Lower leg skin (tissue), 4 donors: ENCODE measurements at regions of chr6 and their contacts with region 1.

Region 1: DNA sequence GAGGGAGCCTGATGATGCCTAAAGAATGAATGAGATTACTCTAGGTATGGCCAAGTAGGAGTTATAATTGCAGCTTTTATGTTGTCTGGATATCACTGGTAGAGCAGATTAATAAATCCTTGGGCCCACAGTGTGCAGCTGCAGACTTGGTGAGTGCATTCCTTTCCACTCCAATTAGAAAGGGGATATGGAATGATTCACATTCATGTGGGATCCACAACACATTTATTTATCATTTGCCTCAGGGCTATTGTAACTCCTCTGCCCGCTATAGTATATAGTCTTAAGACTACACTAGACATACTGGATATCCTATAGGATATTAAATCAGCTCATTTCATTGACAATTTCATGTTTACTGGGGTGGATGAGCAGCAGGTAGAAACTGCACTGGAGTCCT is 11.6 kb upstream of the HLA-G start:
- DNase-seq: no peak
- H3K4me3 ChIP-seq: no peak overlapping the region
- CTCF ChIP-seq: no peak
- POLR2A ChIP-seq: no peak

Region 2: GRCh38 chr6:28458564-28458963 is 1357.5 kb before region 1 on chr6:
- intact Hi-C with region 1: loop called (anchors 5 kb)
- DNase-seq: no peak
- H3K4me3 ChIP-seq: no peak overlapping the region
- CTCF ChIP-seq: no peak
- POLR2A ChIP-seq: no peak